CD4-positive, alpha-beta T cell (primary cell): ENCODE measurements at regions of chr7 and their contacts with region 1.

Region 1: DNA sequence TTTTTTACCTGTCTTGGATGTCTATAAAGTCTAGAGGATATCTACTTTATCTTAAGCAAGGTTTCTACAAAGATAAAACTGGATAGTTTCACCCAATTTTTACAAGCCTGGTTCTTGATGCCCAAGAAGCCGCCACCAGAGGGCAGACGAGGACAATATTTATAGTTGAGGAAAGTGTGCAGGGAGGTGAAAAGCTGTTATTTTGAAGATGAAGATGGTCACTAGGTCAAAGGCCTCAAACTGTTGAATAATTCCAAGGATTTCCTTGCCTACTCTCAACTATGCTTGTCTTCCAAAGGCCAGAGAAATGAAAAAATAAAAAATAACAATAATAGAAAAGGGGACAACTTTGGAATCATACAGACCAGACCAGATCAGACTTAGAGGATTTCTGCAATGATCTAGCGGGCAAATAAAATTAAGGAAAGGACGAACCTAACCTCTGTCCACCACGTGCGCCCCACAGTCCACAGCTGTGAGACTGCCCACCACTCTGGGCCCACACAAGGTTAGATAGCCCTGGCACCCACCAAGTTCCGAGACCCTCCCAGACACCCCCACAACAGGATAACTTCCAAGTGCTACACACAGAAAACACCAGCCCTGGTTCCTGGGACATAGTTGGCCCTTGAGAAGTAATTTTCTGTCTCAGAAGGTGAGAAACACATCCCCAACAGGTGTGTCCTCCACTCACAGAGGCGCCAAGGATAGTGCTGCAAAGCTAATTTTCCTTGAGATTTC is 2.8 kb downstream of the PKD1L1 start:
- DNase-seq: peak; percentile 57 to 84 (median 72)
- ATAC-seq: peak; percentile 54
- H3K4me3 ChIP-seq: no peak overlapping the region
- H3K4me3 Mint-ChIP-seq: no peak overlapping the region
- H3K27ac ChIP-seq: no peak overlapping the region
- H3K27ac Mint-ChIP-seq: no peak overlapping the region
- H3K4me1 ChIP-seq: no peaks in the 10 kb centered on the region
- H3K4me1 Mint-ChIP-seq: no peaks in the 10 kb centered on the region
- H3K27me3 ChIP-seq: no peaks in the 10 kb centered on the region
- H3K27me3 Mint-ChIP-seq: no peaks in the 10 kb centered on the region
- CTCF ChIP-seq: peak; percentile 86

Region 2: GRCh38 chr7:48154792-48155413 is 209.5 kb after region 1 on chr7:
- CTCF ChIA-PET with region 1: interaction called, 11 read pairs
- POLR2A ChIA-PET with region 1: no interaction called
- intact Hi-C with region 1: loop called in 1 of 2 experiments (anchors 2 kb)
- DNase-seq: peak in 13 of 14 experiments; percentile 1 to 51 (median 15)
- ATAC-seq: no peak
- H3K4me3 ChIP-seq: no peak overlapping the region
- H3K4me3 Mint-ChIP-seq: no peak overlapping the region
- H3K27ac ChIP-seq: no peak overlapping the region
- H3K27ac Mint-ChIP-seq: no peak overlapping the region
- H3K4me1 ChIP-seq: no peaks in the 10 kb centered on the region
- H3K4me1 Mint-ChIP-seq: no peaks in the 10 kb centered on the region
- H3K27me3 ChIP-seq: peaks cover 0 to 3% of the 10 kb centered on the region in 2 experiments
- H3K27me3 Mint-ChIP-seq: peaks cover 33% of the 10 kb centered on the region
- CTCF ChIP-seq: peak; percentile 37

Region 3: DNA sequence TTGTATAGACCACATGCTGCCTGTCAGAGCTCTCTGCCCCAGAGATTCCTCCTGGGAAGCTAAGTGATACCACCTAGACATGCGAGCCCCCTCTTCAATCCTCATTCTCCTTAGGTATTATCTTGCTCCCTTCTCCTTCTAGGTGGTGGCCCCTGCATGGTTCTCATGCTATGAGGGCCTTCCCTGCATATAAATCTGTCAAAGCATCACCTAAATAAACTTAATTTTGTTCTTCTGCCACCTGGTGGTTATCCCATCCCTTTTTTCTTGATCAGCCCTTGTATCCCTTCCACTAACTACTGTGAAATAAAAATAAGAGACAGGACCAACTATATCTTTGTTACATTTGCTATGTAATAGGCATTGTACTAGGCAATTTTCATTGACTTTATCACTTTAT is 1221.0 kb after region 1 on chr7:
- CTCF ChIA-PET with region 1: no interaction called
- POLR2A ChIA-PET with region 1: no interaction called
- intact Hi-C with region 1: loop called (anchors 10 kb)
- DNase-seq: no peak
- ATAC-seq: no peak
- H3K4me3 ChIP-seq: no peak overlapping the region
- H3K4me3 Mint-ChIP-seq: no peak overlapping the region
- H3K27ac ChIP-seq: no peak overlapping the region
- H3K27ac Mint-ChIP-seq: no peak overlapping the region
- H3K4me1 ChIP-seq: no peaks in the 10 kb centered on the region
- H3K4me1 Mint-ChIP-seq: no peaks in the 10 kb centered on the region
- H3K27me3 ChIP-seq: no peaks in the 10 kb centered on the region
- H3K27me3 Mint-ChIP-seq: no peaks in the 10 kb centered on the region
- CTCF ChIP-seq: no peak

Region 4: GRCh38 chr7:49852619-49853462 is 1907.4 kb after region 1 on chr7:
- CTCF ChIA-PET with region 1: no interaction called
- POLR2A ChIA-PET with region 1: no interaction called
- intact Hi-C with region 1: loop called (anchors 5 kb)
- DNase-seq: peak in 3 of 14 experiments; percentile 5 to 23 (median 23)
- ATAC-seq: no peak
- H3K4me3 ChIP-seq: no peak overlapping the region
- H3K4me3 Mint-ChIP-seq: no peak overlapping the region
- H3K27ac ChIP-seq: no peak overlapping the region
- H3K27ac Mint-ChIP-seq: no peak overlapping the region
- H3K4me1 ChIP-seq: no peaks in the 10 kb centered on the region
- H3K4me1 Mint-ChIP-seq: no peaks in the 10 kb centered on the region
- H3K27me3 ChIP-seq: no peaks in the 10 kb centered on the region
- H3K27me3 Mint-ChIP-seq: peaks cover 9% of the 10 kb centered on the region
- CTCF ChIP-seq: no peak